Naive thymus-derived CD8-positive, alpha-beta T cell (primary cell): ENCODE measurements at regions of chr13 and their contacts with region 1.

Region 1: GRCh38 chr13:111187960-111188541 is 72.9 kb downstream of the ARHGEF7 start:
- DNase-seq: no peak
- ATAC-seq: no peak
- H3K4me3 Mint-ChIP-seq: peak overlapping the region in 9 of 10 donors; percentile 63 to 87 (median 81)
- H3K27ac Mint-ChIP-seq: peak overlapping the region; percentile 16 to 93 (median 84)
- H3K4me1 Mint-ChIP-seq: peaks cover 61 to 97% (median 90%) of the 10 kb centered on the region in 4 donors
- H3K27me3 Mint-ChIP-seq: no peaks in the 10 kb centered on the region

Region 2: DNA sequence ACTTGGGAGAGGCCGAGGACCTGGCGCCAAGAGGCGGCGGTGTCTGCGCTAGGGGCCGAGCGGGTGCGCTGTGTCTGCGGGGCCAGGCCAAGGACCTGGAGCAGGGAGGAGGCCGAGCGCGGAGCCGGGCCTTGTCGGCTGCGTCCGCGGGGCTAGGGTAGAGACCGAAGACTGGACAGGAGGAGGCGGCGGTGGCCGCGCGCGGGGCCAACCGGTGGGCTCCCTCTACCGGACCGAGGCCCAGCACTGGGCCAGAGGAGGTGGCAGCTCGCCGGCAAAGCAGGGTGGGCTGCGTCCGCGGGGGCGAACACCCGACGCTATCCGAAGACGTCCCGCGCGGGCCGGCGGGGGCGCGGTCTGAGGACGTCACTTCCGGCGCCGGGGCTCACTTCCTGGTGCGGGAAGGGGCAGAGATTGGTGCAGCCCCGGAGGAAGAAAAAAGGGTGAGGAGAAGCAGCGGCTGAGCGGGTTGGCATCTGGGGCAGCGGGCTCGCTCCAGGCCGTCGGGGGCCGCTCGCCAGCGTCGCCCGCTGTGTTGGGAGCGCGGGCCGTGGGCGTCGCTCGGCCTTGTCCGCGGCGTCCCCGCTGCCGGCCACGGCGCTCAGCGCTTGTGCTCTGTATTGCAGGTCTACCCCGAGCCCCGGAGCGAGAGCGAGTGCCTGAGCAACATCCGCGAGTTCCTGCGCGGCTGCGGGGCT is 34.6 kb before region 1 on chr13:
- POLR2A ChIA-PET with region 1: interaction called, 13 read pairs
- DNase-seq: peak; percentile 88 to 95 (median 93)
- ATAC-seq: peak; percentile 87 to 88
- H3K4me3 Mint-ChIP-seq: peak overlapping the region; percentile 85 to 96 (median 94)
- H3K27ac Mint-ChIP-seq: peak overlapping the region; percentile 75 to 97 (median 94)
- H3K4me1 Mint-ChIP-seq: peaks cover 6 to 34% (median 32%) of the 10 kb centered on the region in 4 donors
- H3K27me3 Mint-ChIP-seq: peaks cover 0 to 2% (median 0%) of the 10 kb centered on the region in 5 donors